HEK293T (cell line): ENCODE measurements at regions of chr3 and their contacts with region 1.

Region 1: DNA sequence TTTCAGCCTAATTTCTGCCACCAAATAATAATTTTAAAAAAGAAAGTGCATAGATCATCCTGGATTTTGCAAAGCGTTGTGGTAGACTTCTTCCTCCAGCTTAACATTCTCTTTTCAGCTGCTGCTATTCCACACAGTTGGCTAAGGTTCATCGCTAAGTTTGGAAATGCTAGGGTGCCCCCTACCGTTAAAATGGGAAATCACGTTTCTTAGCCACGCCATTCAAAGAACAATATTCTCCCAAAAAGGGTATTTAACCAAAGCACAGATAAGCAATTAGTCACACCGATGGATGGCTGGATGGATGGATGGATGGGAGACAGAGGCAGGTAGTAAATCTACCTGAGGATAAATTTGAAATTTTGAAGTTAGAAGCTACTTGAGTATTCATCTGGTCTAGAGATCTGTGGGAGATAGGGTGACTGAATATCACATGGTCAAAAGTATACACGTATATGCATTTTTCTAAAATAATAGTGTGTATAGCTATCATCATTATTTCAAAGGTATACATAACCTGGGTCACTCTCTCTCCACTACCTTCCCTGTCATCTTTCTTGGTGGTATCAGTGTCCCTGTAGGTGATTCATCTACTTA is 67.2 kb downstream of the EFHB start:
- DNase-seq: peak; percentile 52

Region 2: GRCh38 chr3:19348929-19349564 is 517.8 kb before region 1 on chr3:
- CTCF ChIA-PET with region 1: interaction called, 12 read pairs
- POLR2A ChIA-PET with region 1: no interaction called
- DNase-seq: peak; percentile 36